ENCODE measurements at regions of chr11 and their contacts with region 1.

Region 1: DNA sequence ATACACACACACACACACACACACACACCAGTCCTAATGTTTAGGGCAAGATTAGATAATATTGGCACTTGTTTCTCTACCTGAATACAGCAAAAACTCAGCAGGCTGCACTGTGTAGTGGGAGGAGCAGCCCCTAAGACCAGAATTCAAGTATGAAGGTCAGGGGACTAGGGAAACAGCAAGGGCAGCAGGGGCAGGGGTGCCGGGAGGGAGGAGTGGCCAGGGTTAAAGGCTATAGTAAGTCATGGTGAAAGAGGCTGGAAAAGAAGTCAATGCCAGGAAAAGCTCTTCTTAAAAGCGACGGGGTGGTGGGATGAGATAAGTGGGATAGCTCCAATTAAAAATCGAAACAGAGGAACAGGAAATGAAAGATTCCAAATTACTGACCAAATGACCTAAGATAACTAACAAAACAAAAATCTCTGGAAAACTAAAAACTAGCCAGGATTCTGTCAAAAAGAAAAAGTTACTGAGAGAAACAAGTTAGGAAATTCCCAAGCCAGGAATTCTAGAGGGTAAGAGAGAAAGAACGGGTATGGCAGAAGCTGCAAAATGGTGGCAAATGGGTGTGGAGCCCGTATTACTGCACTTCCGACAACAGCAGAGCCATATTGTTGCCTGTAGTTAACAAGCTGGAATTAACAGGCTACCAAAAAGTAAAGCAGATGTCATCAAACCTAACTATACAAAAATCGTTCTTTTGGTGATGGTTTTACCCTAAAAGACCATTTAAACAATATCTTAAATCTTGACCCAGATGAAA is 1.3 kb downstream of the ASCL3 start:
- DNase-seq: no peak
- ATAC-seq: no peak
- H3K4me3 ChIP-seq: no peak overlapping the region
- H3K27ac ChIP-seq: no peak overlapping the region
- H3K4me1 ChIP-seq: no peaks in the 10 kb centered on the region
- H3K27me3 ChIP-seq: no peaks in the 10 kb centered on the region
- CTCF ChIP-seq: no peak
- EP300 ChIP-seq: no peak
- POLR2A ChIP-seq: no peak
- RAD21 ChIP-seq: no peak

Region 2: GRCh38 chr11:8911029-8911826 is 30.3 kb before region 1 on chr11 and contains the start of gene AKIP1:
- CTCF ChIA-PET with region 1: interaction called, 12 read pairs
- POLR2A ChIA-PET with region 1: no interaction called
- RAD21 ChIA-PET with region 1: interaction called, 3 read pairs
- SMC1A ChIA-PET with region 1: interaction called, 6 read pairs
- in situ Hi-C with region 1: no loop called
- intact Hi-C with region 1: no loop called
- DNase-seq: peak; percentile 65
- ATAC-seq: peak; percentile 88
- H3K4me3 ChIP-seq: peak within 1 kb of the TSS; percentile 95
- H3K27ac ChIP-seq: peak within 1 kb of the TSS; percentile 65
- H3K4me1 ChIP-seq: peaks cover 11% of the 10 kb centered on the region
- H3K27me3 ChIP-seq: no peaks in the 10 kb centered on the region; a peak in 1 of 4 replicates
- CTCF ChIP-seq: no peak
- EP300 ChIP-seq: no peak
- POLR2A ChIP-seq: peak; percentile 61; the same call in 1 of the 2 replicates
- RAD21 ChIP-seq: no peak
- polyA plus RNA-seq, gene AKIP1: 5.1 to 14.7 TPM